Motor neuron (in vitro differentiated cells): ENCODE measurements at regions of chr1 and their contacts with region 1.

Region 1: GRCh38 chr1:40612345-40612831 is 53.1 kb downstream of the RIMS3 start:
- ATAC-seq: peak; percentile 83 to 100 (median 88)
- H3K4me3 ChIP-seq: no peak overlapping the region
- H3K27ac ChIP-seq: no peak overlapping the region
- H3K4me1 ChIP-seq: no peaks in the 10 kb centered on the region

Region 2: DNA sequence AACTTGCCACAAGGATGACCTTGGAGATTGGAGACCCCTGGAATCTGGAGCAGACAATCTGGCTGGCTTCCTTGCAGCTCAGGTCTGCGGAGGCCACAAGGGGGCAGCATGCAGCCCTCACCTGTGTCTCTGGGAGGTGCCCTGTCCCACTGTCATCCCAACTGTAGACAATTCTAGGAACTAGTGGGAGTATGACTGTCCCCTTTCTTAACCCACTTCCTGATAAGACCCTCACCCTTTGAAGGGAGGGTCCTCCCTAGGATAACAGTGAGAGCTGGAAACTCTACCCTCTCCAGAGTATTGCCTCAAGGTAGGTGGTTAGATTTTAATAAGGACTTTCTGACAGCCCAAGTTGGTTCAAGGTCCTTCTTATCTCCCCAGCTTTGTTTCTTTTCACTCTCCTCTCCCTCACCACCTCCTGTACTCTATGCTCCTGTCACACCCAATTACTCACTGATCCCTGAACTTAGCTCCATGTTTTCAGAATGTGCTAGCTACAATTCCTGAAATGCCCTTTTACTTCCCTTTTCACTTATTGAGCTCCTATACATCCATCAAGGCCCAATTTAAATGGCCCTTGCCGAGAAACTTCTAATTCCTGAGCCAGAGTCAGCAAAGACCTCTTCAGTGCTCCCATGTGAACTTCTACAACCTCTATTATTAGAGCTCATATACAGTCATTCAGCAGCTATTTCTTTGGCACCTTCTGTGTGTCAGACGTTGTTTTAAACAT is 162.0 kb after region 1 on chr1:
- in situ Hi-C with region 1: loop called in 1 of 9 experiments (anchors 25 kb)
- ATAC-seq: peak; percentile 61 to 86 (median 70)
- H3K4me3 ChIP-seq: no peak overlapping the region
- H3K27ac ChIP-seq: no peak overlapping the region
- H3K4me1 ChIP-seq: peaks cover 2 to 6% of the 10 kb centered on the region in 2 donors

Region 3: DNA sequence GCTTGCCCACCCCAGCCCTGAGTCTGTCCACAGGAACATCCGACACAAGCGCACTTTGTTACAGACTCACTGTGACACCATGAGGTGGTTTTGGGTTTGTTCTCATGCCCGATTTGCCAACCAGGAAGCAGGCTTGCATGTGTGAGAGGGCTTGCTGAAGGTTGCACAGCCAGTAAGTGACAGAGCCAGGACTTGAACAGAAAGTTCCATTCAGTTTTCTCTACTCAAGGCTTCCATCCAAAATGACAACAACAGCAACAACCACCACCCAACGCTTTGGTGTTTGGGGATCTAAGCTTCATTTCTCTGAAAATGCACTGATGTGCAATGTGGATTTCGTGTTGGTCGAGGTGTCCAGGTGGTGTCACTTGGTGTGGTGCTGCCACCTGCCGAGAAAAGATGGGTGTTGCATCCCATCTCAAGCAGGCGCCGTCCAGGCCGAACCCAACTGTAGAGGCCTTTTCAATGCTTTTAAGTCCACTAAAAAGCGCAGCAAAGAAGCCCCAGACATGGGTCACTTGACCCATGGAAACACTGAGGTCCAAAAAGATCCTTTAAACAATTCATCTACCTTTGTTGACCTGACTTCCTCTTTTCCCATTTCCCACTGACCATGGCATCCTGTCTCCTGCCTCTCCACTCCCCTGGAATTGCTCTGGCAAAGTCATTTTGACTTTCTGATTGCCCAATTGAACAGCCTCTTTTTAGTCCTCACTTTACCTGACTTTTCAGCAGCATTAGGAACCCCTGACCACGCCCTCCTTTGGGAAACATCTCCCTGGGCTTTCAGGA is 237.6 kb after region 1 on chr1:
- in situ Hi-C with region 1: loop called in 2 of 9 experiments (anchors 10 to 25 kb)
- ATAC-seq: peak; percentile 59 to 86 (median 74)
- H3K4me3 ChIP-seq: no peak overlapping the region
- H3K27ac ChIP-seq: no peak overlapping the region
- H3K4me1 ChIP-seq: peaks cover 11 to 18% of the 10 kb centered on the region in 2 donors

Region 4: DNA sequence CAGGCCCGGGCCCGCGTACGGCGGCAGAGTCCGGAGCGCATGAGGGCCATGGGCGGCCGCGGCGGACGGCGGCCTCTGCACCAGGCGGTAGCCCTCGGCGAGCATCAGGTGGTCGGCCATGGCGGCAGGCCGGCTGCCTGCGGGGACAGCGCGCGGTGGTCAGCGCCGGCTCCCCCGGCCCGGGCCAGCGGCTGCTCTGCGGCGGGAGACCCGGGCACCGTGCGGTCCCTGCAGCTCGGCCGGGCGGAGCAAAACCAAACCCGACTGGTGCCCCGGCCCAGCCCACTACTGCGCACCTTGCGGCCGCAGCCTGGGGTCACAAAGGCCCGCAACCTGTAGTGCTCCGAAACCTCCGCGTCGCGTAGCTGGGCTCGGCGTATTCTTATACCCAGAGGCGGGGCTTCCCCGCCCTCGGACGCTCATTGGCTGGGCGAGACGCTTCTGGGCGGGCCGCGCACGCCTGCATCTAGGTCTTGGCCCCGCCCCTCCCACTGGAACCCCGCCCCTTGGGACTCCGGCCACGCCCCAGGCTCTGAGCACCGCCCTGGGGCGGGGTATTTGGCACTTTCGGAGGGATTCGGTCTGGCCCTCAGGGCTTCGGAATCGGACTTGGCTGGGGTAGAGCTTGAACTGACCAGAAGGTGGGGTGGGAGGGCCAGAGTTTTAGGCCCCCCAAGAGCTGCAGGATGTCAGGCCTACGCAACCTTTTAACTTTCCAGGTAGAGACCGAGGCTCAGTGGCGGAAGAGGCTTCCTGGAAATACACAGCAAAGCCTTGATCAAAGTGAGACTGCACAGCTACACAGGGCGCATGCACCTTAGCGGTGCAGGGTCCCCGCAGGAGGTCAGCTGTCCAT is 249.8 kb after region 1 on chr1 and contains the start of gene CITED4:
- in situ Hi-C with region 1: loop called in 1 of 9 experiments (anchors 25 kb)
- ATAC-seq: peak; percentile 91 to 98 (median 96)
- H3K4me3 ChIP-seq: peak within 1 kb of the TSS; percentile 52 to 67 (median 65)
- H3K27ac ChIP-seq: no peak within 1 kb of the TSS
- H3K4me1 ChIP-seq: peaks cover 3 to 4% of the 10 kb centered on the region in 2 donors
- total RNA-seq, gene CITED4: 0.20 to 6.1 (median 2.8) TPM

Region 5: DNA sequence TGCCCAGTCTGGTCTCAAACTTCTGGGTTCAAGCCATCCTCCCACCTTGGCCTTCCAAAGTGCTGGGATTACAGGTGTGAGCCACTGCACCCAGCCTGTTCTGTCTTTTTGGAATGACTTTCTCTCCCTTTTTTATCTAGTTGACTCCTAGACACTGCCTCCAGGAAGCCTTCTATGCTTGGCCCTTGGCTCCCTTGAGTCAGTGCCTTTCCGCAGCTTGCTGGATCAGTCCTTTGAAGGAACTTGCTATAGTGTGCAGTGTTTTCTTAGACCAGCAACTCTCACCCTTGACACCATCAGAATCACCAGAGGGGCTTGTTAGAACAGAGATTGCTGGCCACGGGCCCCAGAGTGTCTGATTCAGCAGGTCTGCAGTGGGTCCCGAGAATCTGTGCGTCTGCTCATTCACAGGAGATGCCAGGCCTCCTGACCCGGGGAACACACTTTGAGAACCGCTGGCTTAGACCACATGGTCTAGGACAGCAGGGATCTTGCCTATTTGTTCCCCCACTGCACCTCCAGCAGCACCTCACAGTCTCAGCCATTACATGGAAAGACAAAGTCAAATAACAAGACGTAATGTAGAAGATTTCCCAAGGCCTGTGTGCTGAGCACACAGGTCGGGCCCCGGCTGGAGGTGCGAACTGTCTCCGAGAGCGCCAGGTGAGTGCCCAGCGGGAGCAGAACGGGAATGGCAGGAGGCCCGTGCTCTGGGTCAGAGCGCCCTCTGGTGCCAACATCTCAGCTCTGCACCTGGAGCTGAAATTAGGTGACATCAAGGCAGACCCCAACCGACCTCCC is 339.8 kb after region 1 on chr1:
- in situ Hi-C with region 1: loop called in 1 of 9 experiments (anchors 25 kb)
- ATAC-seq: peak; percentile 17 to 86 (median 81)
- H3K4me3 ChIP-seq: no peak overlapping the region
- H3K27ac ChIP-seq: no peak overlapping the region
- H3K4me1 ChIP-seq: no peaks in the 10 kb centered on the region